H1 (cell line): ENCODE measurements at regions of chr3 and their contacts with region 1.

Region 1: DNA sequence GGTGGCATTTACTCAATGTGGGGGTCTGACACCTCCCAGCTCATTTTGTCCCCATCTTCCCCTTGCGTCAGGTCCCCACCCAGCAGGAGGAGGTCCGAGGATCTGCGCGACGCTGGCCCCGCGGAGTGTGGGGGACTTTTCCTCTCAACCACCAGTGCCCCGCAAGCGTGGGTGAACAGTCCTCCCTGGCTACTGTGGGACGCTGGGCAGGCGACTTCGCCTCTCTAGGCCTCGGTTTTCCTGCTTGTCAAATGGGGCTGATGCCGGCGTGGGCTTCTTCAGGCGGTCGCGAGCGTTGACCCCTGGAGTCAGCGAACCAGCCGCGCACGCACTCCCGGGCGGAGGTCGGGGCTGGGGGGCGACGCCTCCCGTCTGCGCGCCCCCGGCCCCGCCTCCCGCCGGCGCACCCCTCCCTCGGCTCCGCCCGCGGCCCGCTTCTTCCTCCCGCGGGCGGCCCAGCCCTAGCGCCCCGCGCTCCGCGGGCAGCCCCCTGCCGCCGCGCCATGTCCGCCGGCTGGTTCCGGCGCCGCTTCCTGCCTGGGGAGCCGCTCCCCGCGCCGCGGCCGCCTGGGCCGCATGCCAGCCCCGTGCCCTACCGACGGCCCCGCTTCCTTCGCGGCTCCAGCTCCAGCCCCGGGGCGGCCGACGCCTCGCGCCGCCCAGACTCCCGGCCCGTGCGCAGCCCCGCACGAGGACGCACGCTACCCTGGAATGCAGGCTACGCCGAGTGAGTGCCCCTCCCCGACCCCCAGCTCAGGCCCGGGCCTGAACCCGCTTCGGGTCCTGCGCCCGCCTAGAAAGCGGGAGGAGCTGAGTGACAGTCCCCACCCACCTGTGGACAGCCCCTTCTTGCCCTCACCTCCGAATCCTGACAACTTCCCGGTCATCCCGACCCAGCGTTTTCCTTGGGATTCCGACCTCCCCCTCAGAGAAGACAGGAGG is at the start of gene PPM1M:
- DNase-seq: peak in 1 of 2 experiments; percentile 83
- H3K4me3 ChIP-seq: peak within 1 kb of the TSS; percentile 32 to 58 (median 51)
- H3K27ac ChIP-seq: no peak within 1 kb of the TSS
- H3K4me1 ChIP-seq: peaks cover 5 to 18% (median 14%) of the 10 kb centered on the region in 4 experiments
- H3K27me3 ChIP-seq: peaks cover 6 to 37% (median 23%) of the 10 kb centered on the region in 4 experiments; a peak in 6 of 7 replicates
- CTCF ChIP-seq: no peak
- EP300 ChIP-seq: no peak
- POLR2A ChIP-seq: no peak
- RAD21 ChIP-seq: no peak
- total RNA-seq, gene PPM1M: 5.2 and 5.4 TPM in 2 replicates

Region 2: GRCh38 chr3:52014613-52015012 is 231.0 kb before region 1 on chr3:
- CTCF ChIA-PET with region 1: no interaction called
- POLR2A ChIA-PET with region 1: no interaction called
- DNase-seq: peak in 1 of 2 experiments; percentile 71
- H3K4me3 ChIP-seq: no peak overlapping the region
- H3K27ac ChIP-seq: no peak overlapping the region
- H3K4me1 ChIP-seq: no peaks in the 10 kb centered on the region; a peak in 1 of 7 replicates
- H3K27me3 ChIP-seq: no peaks in the 10 kb centered on the region; a peak in 1 of 7 replicates
- CTCF ChIP-seq: peak in 2 of 3 experiments; percentile 70 to 86; a peak in 3 of 4 replicates
- EP300 ChIP-seq: no peak
- POLR2A ChIP-seq: no peak
- RAD21 ChIP-seq: peak; percentile 41 to 55

Region 3: DNA sequence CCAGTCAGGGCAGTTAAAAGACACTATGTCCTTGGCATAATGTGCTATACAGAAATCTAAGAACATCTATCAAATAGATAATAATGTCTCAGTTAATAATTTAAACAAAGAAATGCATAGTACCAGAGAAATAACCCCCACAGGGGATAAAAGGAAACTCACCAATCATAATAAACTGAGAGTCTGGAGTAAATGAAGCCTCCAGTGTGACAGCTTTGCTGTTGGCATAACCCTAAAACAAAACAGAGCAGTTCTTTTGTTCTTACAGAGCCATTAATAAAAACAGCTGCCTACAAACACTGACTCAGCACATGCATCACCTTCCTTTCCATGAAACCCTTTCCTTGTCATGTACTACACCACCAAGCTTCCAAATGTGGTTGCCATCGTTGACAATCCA is 13.4 kb after region 1 on chr3:
- CTCF ChIA-PET with region 1: interaction called, 7 read pairs
- POLR2A ChIA-PET with region 1: interaction called, 20 read pairs
- DNase-seq: no peak
- H3K4me3 ChIP-seq: no peak overlapping the region
- H3K27ac ChIP-seq: no peak overlapping the region
- H3K4me1 ChIP-seq: no peaks in the 10 kb centered on the region
- H3K27me3 ChIP-seq: no peaks in the 10 kb centered on the region
- CTCF ChIP-seq: no peak
- EP300 ChIP-seq: no peak
- POLR2A ChIP-seq: no peak
- RAD21 ChIP-seq: no peak